ENCODE measurements at regions of chr19 and their contacts with region 1.

Region 1: GRCh38 chr19:2610637-2611482 is 91.6 kb downstream of the GNG7 start:
- DNase-seq: peak; percentile 90
- H3K4me3 Mint-ChIP-seq: peak overlapping the region; percentile 64
- H3K27ac Mint-ChIP-seq: no peak overlapping the region
- H3K4me1 Mint-ChIP-seq: no peaks in the 10 kb centered on the region
- H3K27me3 Mint-ChIP-seq: peaks cover 11% of the 10 kb centered on the region
- CTCF ChIP-seq: peak; percentile 96

Region 2: GRCh38 chr19:2157452-2157851 is 453.4 kb before region 1 on chr19:
- CTCF ChIA-PET with region 1: interaction called, 5 read pairs
- POLR2A ChIA-PET with region 1: interaction called, 3 read pairs
- intact Hi-C with region 1: loop called (anchors 2 kb)
- DNase-seq: no peak
- H3K4me3 Mint-ChIP-seq: no peak overlapping the region
- H3K27ac Mint-ChIP-seq: no peak overlapping the region
- H3K4me1 Mint-ChIP-seq: peaks cover 17% of the 10 kb centered on the region
- H3K27me3 Mint-ChIP-seq: no peaks in the 10 kb centered on the region
- CTCF ChIP-seq: no peak

Region 3: DNA sequence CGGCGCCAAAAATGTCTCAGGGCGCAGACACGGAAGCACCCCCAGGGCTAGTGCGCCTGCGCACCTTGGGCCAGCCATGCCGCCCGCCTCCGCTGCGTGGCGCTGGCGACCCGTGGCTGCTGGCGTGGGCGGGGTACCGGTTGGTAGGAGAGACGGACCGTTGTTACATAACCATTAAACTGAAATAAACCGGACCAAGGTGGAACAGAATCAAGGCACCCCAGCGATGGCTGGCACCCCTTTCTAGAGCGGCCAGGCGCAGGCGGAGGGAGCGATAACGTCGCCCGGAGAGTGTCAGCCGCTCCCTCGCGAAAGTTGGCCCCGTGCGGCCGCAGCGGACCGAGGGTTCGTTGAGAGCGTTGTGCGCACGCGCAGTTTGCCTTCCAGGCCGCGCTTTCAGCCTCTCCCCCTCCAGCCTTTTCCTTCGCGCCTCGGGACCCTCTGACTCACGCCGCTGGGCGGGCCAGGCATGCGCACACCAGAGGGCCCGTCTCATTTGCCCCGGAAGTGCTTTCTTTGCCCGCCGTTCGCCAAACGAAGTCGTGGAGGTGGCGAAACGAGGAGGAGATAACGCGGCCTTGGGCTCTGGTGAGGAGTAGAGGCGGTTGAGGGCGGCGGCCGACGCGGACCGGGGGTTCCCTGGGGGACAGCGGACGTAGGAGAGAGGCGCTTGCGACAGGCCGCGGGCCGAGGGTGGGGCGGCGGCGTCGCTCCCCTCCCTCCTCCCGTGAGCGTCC is 374.4 kb before region 1 on chr19 and contains the starts of genes PLEKHJ1 and SF3A2:
- CTCF ChIA-PET with region 1: interaction called, 3 read pairs
- POLR2A ChIA-PET with region 1: no interaction called
- intact Hi-C with region 1: loop called (anchors 5 kb)
- DNase-seq: peak; percentile 98
- H3K4me3 Mint-ChIP-seq: peak within 1 kb of the TSS; percentile 86
- H3K27ac Mint-ChIP-seq: peak within 1 kb of the TSS; percentile 99
- H3K4me1 Mint-ChIP-seq: peaks cover 23% of the 10 kb centered on the region
- H3K27me3 Mint-ChIP-seq: no peaks in the 10 kb centered on the region
- CTCF ChIP-seq: peak; percentile 98
- total RNA-seq, gene PLEKHJ1: 44.3 and 54.1 TPM in 2 replicates
- total RNA-seq, gene SF3A2: 101 and 119 TPM in 2 replicates

Region 4: DNA sequence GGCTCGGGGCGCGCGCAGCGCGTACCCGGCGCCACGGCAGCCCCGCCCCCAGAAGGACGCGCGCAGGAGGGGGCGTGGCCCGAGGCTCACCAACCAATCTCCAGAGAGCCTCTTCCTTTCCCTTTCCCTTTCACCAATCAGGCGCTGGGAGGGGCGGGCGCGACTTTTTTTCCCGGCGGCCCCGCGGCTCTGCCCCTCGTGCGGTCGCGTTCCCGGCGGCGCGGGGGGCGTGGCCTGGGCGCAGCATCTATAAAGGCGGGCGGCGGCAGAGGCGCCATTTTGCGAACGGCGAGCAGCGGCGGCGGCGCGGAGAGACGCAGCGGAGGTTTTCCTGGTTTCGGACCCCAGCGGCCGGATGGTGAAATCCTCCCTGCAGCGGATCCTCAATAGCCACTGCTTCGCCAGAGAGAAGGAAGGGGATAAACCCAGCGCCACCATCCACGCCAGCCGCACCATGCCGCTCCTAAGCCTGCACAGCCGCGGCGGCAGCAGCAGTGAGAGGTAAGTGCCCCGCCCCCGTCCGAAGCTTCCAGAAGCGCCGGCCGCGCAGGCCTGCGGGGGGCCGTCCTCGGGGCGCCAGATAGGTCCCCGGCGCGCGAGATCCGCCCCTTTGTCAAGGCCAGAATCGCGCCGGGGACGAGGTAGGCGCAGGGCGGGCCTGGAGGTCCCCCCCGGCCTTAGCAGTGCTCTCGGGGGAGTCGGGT is 341.5 kb before region 1 on chr19:
- CTCF ChIA-PET with region 1: no interaction called
- POLR2A ChIA-PET with region 1: no interaction called
- intact Hi-C with region 1: loop called (anchors 10 kb)
- DNase-seq: peak; percentile 97
- H3K4me3 Mint-ChIP-seq: peak overlapping the region; percentile 91
- H3K27ac Mint-ChIP-seq: peak overlapping the region; percentile 88
- H3K4me1 Mint-ChIP-seq: peaks cover 26% of the 10 kb centered on the region
- H3K27me3 Mint-ChIP-seq: no peaks in the 10 kb centered on the region
- CTCF ChIP-seq: no peak

Region 5: DNA sequence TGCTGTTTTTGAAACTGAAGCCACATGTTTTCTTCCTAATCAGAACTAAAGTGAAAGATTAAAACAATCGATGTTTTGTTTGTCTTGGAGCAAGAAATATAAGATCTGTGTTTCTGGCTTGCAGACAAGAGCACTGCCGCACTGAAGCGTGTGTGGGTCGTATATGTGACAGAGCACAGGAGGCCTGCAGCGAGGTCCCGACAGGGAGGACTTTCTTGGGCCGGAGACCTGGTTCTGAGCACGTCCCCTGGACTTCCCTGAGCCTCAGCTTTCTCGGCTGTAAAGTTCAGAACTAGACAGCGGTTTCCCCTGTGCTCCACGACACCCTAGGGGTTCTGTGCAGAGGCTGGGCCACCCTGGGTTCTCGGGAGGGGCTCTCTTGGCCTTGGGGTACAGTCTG is 74.4 kb before region 1 on chr19:
- CTCF ChIA-PET with region 1: no interaction called
- POLR2A ChIA-PET with region 1: no interaction called
- intact Hi-C with region 1: no loop called
- DNase-seq: no peak
- H3K4me3 Mint-ChIP-seq: no peak overlapping the region
- H3K27ac Mint-ChIP-seq: peak overlapping the region; percentile 87
- H3K4me1 Mint-ChIP-seq: peaks cover 37% of the 10 kb centered on the region
- H3K27me3 Mint-ChIP-seq: no peaks in the 10 kb centered on the region
- CTCF ChIP-seq: no peak

Region 6: GRCh38 chr19:2578901-2579677 is 31.8 kb before region 1 on chr19:
- CTCF ChIA-PET with region 1: interaction called, 18 read pairs
- POLR2A ChIA-PET with region 1: interaction called, 9 read pairs
- intact Hi-C with region 1: loop called (anchors 5 kb)
- DNase-seq: peak; percentile 96
- H3K4me3 Mint-ChIP-seq: peak overlapping the region; percentile 67
- H3K27ac Mint-ChIP-seq: peak overlapping the region; percentile 40
- H3K4me1 Mint-ChIP-seq: peaks cover 5% of the 10 kb centered on the region
- H3K27me3 Mint-ChIP-seq: no peaks in the 10 kb centered on the region
- CTCF ChIP-seq: peak; percentile 86

Region 7: GRCh38 chr19:2627319-2627829 is 16.5 kb after region 1 on chr19:
- CTCF ChIA-PET with region 1: interaction called, 15 read pairs
- POLR2A ChIA-PET with region 1: interaction called, 11 read pairs
- intact Hi-C with region 1: no loop called
- DNase-seq: peak; percentile 98
- H3K4me3 Mint-ChIP-seq: peak overlapping the region; percentile 45
- H3K27ac Mint-ChIP-seq: peak overlapping the region; percentile 90
- H3K4me1 Mint-ChIP-seq: peaks cover 22% of the 10 kb centered on the region
- H3K27me3 Mint-ChIP-seq: no peaks in the 10 kb centered on the region
- CTCF ChIP-seq: no peak

Region 8: DNA sequence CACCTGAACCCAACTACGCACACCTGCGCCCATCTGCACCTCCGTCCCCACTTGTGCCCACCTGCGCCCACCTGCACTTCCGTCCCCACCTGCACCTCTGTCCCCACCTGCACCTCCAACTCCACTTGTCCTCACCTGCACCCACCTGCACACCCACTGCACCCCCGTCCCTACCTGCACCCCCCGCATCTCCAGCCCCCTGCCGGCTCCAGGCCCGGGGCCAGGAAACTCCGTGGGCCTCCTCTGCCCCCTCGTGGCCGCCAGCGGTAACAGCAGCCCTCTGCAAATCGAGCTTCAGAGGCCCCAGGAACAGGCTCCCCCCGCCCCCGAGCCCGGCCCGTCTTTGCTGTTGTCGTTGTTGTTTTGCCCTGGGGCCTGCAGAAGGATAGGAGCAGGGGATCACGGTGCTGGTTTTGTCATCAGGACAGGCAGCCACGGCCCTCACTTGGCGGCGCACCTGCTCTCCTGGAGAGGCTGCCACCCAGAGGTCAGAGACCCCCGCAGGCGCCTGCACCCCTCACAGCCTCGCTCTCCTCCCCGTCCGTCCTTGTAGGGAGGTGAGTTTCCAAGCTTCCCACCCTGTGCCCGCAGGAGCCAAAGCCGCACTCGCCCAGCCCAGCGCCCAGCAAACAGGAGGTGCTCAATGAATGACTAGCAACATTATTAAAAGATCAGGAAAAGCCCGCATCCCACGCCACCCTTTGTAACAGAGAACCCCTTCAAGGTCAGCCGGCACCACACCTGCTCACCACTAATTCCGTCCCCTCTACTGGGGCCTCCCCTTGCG is 26.2 kb after region 1 on chr19:
- CTCF ChIA-PET with region 1: interaction called, 12 read pairs
- POLR2A ChIA-PET with region 1: no interaction called
- intact Hi-C with region 1: no loop called
- DNase-seq: peak; percentile 39
- H3K4me3 Mint-ChIP-seq: peak overlapping the region; percentile 28
- H3K27ac Mint-ChIP-seq: no peak overlapping the region
- H3K4me1 Mint-ChIP-seq: peaks cover 5% of the 10 kb centered on the region
- H3K27me3 Mint-ChIP-seq: no peaks in the 10 kb centered on the region
- CTCF ChIP-seq: peak; percentile 90

Region 9: GRCh38 chr19:2867025-2867991 is 256.4 kb after region 1 on chr19 and contains the start of gene ZNF556:
- CTCF ChIA-PET with region 1: no interaction called
- POLR2A ChIA-PET with region 1: no interaction called
- intact Hi-C with region 1: no loop called
- DNase-seq: no peak
- H3K4me3 Mint-ChIP-seq: no peak within 1 kb of the TSS
- H3K27ac Mint-ChIP-seq: no peak within 1 kb of the TSS
- H3K4me1 Mint-ChIP-seq: no peaks in the 10 kb centered on the region
- H3K27me3 Mint-ChIP-seq: no peaks in the 10 kb centered on the region
- CTCF ChIP-seq: no peak
- total RNA-seq, gene ZNF556: not detected in 2 replicates